CD4-positive, alpha-beta T cell (primary cell): ENCODE measurements at regions of chr22 and their contacts with region 1.

Region 1: DNA sequence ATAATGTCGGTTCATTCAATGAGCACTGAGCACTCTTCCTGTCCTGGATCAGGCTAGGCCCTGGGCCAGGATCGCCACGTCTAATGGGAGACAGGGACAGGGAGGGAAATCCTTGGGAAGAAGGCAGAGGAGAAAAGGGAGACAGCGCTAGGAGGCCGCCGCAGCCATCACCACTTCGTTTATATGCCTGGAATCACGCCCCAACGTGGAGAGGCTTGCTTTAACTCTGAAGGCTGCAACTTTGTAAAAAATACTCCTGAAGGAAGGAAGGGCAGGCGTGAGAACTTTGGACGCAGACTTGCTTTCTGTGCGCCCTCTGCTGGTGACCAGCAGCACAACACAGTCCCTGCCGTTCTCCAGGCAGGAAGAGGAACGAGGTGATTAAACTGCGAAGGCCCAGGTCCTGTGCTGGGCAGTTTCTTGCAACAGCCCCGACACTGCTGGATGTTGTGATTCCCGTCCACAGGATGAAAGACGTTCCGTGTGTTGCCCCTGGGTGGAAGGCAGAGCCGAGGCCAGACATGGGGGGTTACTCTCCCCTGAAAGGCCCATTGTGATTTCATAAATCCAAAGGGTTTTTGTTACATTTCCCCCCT is 22.1 kb downstream of the RIBC2 start:
- DNase-seq: peak; percentile 72 to 91 (median 78)
- ATAC-seq: peak; percentile 97
- H3K4me3 ChIP-seq: no peak overlapping the region
- H3K4me3 Mint-ChIP-seq: no peak overlapping the region
- H3K27ac ChIP-seq: no peak overlapping the region
- H3K27ac Mint-ChIP-seq: no peak overlapping the region
- H3K4me1 ChIP-seq: peaks cover 12% of the 10 kb centered on the region
- H3K4me1 Mint-ChIP-seq: peaks cover 17% of the 10 kb centered on the region
- H3K27me3 ChIP-seq: no peaks in the 10 kb centered on the region
- H3K27me3 Mint-ChIP-seq: no peaks in the 10 kb centered on the region
- CTCF ChIP-seq: peak; percentile 96

Region 2: GRCh38 chr22:45169576-45170466 is 265.8 kb before region 1 on chr22:
- CTCF ChIA-PET with region 1: no interaction called
- POLR2A ChIA-PET with region 1: no interaction called
- intact Hi-C with region 1: loop called (anchors 10 kb)
- DNase-seq: peak in 4 of 14 experiments; percentile 10 to 63 (median 36)
- ATAC-seq: no peak
- H3K4me3 ChIP-seq: no peak overlapping the region
- H3K4me3 Mint-ChIP-seq: peak overlapping the region; percentile 83
- H3K27ac ChIP-seq: peak overlapping the region; percentile 43 to 66
- H3K27ac Mint-ChIP-seq: peak overlapping the region; percentile 89
- H3K4me1 ChIP-seq: peaks cover 79% of the 10 kb centered on the region
- H3K4me1 Mint-ChIP-seq: peaks cover 88% of the 10 kb centered on the region
- H3K27me3 ChIP-seq: no peaks in the 10 kb centered on the region
- H3K27me3 Mint-ChIP-seq: no peaks in the 10 kb centered on the region
- CTCF ChIP-seq: no peak